GM10248 (cell line): ENCODE measurements at regions of chr12 and their contacts with region 1.

Region 1: DNA sequence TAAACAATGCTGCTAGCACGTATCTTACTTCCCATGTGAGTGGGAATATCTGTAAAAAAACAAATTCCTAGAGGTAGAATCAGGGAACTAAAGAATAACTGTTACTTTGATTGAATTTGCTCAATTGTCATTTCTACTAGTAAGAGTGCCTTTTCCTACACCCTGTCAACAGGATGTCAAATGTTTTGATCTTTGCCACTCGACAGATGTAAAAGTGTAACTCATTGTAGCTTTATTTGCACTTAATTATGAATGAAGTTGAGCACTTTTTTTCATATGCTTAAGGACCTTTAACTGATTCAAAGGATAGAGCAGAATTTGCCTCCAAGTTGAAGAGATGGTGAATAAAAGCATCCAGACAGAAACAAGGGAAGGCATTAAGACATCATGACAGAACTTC is 104.5 kb downstream of the PPP1R12A start:
- DNase-seq: no peak
- CTCF ChIP-seq: no peak

Region 2: GRCh38 chr12:79818856-79819255 is 11.6 kb before region 1 on chr12:
- CTCF ChIA-PET with region 1: interaction called, 10 read pairs
- POLR2A ChIA-PET with region 1: no interaction called
- DNase-seq: no peak
- CTCF ChIP-seq: no peak

Region 3: GRCh38 chr12:79857675-79858074 is 27.2 kb after region 1 on chr12:
- CTCF ChIA-PET with region 1: no interaction called
- POLR2A ChIA-PET with region 1: no interaction called
- DNase-seq: no peak
- CTCF ChIP-seq: no peak